PC-9 (cell line): ENCODE measurements at regions of chr6 and their contacts with region 1.

Region 1: DNA sequence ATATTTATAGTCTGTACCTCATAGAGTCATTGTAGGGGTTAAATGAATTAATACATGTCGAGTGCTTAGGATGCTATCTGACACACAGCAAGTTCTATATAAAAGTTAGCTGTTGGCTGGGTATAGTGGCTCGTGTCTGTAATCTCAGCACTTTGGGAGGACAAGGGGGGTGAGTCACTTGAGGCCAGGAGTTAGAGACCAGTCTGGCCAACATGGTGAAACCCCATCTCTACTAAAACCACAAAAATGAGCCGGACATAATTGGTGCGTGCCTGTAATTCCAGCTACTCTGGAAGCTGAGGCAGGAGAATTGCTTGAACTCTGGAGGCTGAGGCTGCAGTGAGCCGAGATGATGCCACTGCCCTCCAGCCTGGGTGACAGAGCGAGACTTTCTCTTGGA is 222.9 kb downstream of the UBE3D start:
- DNase-seq: peak; percentile 49 to 66
- H3K4me3 ChIP-seq: no peak overlapping the region
- H3K27ac ChIP-seq: no peak overlapping the region
- H3K4me1 ChIP-seq: no peaks in the 10 kb centered on the region
- H3K27me3 ChIP-seq: no peaks in the 10 kb centered on the region
- CTCF ChIP-seq: no peak

Region 2: GRCh38 chr6:82954937-82955577 is 112.3 kb after region 1 on chr6:
- CTCF ChIA-PET with region 1: no interaction called
- POLR2A ChIA-PET with region 1: no interaction called
- intact Hi-C with region 1: loop called (anchors 5 kb)
- DNase-seq: no peak
- H3K4me3 ChIP-seq: no peak overlapping the region
- H3K27ac ChIP-seq: no peak overlapping the region
- H3K4me1 ChIP-seq: no peaks in the 10 kb centered on the region
- H3K27me3 ChIP-seq: no peaks in the 10 kb centered on the region
- CTCF ChIP-seq: no peak

Region 3: DNA sequence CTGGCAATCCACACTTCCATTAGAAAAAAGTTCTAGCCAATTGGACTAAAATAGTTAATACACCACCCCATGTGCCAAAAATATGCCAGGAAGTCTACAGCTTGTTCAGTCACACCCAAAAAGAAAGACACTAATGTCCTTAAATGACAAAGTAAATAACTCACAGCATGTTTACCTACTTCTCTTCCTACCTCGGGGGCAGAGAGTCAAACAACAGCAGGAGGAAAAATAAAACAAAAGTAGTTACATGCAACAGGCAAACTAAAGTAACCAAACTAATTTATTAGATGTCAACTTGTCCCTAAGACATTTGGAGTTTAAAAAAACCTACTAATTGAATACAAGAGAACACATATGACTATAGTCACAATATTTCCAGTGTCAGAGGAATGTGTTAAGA is 165.9 kb after region 1 on chr6:
- CTCF ChIA-PET with region 1: no interaction called
- POLR2A ChIA-PET with region 1: no interaction called
- intact Hi-C with region 1: no loop called
- DNase-seq: peak in 1 of 2 experiments; percentile 38
- H3K4me3 ChIP-seq: no peak overlapping the region
- H3K27ac ChIP-seq: 0 out of 2 replicates have a peak overlapping the region, but pooled peaks have one; percentile 29
- H3K4me1 ChIP-seq: peaks cover 17% of the 10 kb centered on the region
- H3K27me3 ChIP-seq: no peaks in the 10 kb centered on the region
- CTCF ChIP-seq: no peak